ENCODE measurements at regions of chr5 and their contacts with region 1.

Region 1: DNA sequence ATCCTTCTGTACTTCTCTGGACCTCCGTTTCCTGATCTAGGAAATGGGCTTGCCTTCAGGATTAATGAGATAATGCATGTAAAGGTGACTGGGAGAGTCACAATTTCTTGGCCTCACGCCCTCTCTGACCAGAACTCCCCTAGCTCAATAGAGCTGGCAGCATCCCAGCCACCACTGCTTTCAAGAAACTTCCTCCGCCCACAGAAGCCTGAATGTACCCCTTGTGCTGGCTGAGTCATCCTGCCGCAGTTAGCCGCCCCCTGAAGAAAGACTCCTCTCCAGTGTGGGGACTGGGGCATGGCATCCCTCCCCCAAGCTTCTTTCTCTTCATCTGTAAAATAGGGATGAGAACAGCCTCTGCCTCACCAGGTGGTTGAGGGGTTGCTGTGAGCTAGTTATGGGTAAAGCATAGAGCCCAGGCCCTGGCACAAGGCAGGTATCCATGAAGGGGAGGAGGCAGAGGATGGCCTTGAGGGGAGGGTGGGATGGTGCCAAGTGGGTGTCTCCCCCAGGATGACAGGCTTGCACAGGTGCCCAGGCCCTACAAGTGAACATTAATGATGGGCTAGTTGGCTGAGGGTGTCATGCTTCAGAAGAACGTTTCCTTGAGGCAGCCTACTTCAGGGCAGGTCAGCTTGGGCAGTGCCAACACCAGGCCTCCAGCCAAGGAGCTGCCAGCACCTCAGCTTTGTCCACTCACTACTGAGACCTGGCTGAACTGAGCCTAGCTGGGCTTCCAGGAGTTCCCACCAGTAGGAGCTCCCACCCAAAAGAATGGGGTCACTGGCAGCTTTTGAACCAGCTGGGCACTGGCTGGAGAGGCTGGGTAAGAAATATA is 3.4 kb downstream of the PDLIM4 start:
- DNase-seq: no peak
- ATAC-seq: no peak
- H3K4me3 Mint-ChIP-seq: no peak overlapping the region
- H3K27ac Mint-ChIP-seq: no peak overlapping the region
- H3K4me1 Mint-ChIP-seq: peaks cover 9% of the 10 kb centered on the region
- H3K27me3 Mint-ChIP-seq: peaks cover 15% of the 10 kb centered on the region
- CTCF ChIP-seq: no peak

Region 2: GRCh38 chr5:132272311-132273210 is 11.6 kb after region 1 on chr5:
- CTCF ChIA-PET with region 1: interaction called, 12 read pairs
- POLR2A ChIA-PET with region 1: no interaction called
- DNase-seq: peak; percentile 89
- ATAC-seq: peak; percentile 65
- H3K4me3 Mint-ChIP-seq: no peak overlapping the region
- H3K27ac Mint-ChIP-seq: peak overlapping the region; percentile 16; the same call in 1 of the 2 replicates
- H3K4me1 Mint-ChIP-seq: peaks cover 16% of the 10 kb centered on the region
- H3K27me3 Mint-ChIP-seq: peaks cover 2% of the 10 kb centered on the region; the same call in 1 of the 2 replicates
- CTCF ChIP-seq: peak; percentile 85

Measured in WTC11 (cell line).